CD8-positive, alpha-beta memory T cell (primary cell): ENCODE measurements at regions of chr7 and their contacts with region 1.

Region 1: GRCh38 chr7:43700059-43700501 is 29.2 kb downstream of the COA1 start:
- DNase-seq: peak in 2 of 5 donors; percentile 60 to 64
- H3K4me3 ChIP-seq: no peak overlapping the region
- H3K4me3 Mint-ChIP-seq: peak overlapping the region in 6 of 7 donors; percentile 17 to 56 (median 36)
- H3K27ac ChIP-seq: no peak overlapping the region
- H3K27ac Mint-ChIP-seq: peak overlapping the region; percentile 5 to 73 (median 46)
- H3K4me1 ChIP-seq: peaks cover 35% of the 10 kb centered on the region
- H3K4me1 Mint-ChIP-seq: peaks cover 30 to 68% (median 44%) of the 10 kb centered on the region in 3 donors
- H3K27me3 ChIP-seq: no peaks in the 10 kb centered on the region
- H3K27me3 Mint-ChIP-seq: no peaks in the 10 kb centered on the region

Region 2: DNA sequence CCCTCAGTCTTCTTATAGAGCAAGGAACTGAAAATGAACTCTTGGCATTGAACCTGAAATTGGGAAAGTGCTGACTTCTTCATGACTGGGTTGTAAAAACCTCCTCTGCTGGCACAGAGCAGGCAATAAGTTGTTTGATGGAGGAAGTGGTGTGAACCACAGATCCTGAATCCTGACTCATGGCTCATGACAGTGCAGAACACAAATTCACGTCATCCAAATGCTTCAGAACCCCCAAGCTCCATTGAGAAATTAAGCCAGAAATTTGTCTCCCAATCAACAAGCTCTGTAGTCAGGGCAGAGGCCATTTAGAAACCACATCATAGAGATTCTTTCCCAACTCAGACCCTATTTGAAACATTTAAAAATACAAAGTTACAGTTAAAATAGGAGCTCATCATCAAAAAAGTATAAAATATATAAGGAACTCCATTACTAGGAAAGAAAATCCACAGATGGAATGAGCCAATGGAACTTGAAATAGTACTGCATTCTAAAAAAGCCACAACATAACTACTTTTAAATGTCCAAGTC is 127.5 kb before region 1 on chr7:
- CTCF ChIA-PET with region 1: interaction called, 10 read pairs
- POLR2A ChIA-PET with region 1: no interaction called
- DNase-seq: no peak
- H3K4me3 ChIP-seq: no peak overlapping the region
- H3K4me3 Mint-ChIP-seq: no peak overlapping the region
- H3K27ac ChIP-seq: no peak overlapping the region
- H3K27ac Mint-ChIP-seq: peak overlapping the region in 1 of 8 donors; percentile 57
- H3K4me1 ChIP-seq: no peaks in the 10 kb centered on the region
- H3K4me1 Mint-ChIP-seq: peaks cover 0 to 5% (median 5%) of the 10 kb centered on the region in 3 donors
- H3K27me3 ChIP-seq: no peaks in the 10 kb centered on the region
- H3K27me3 Mint-ChIP-seq: peaks cover 0 to 1% of the 10 kb centered on the region in 2 donors

Region 3: GRCh38 chr7:43625453-43625852 is 74.6 kb before region 1 on chr7:
- CTCF ChIA-PET with region 1: interaction called, 14 read pairs
- POLR2A ChIA-PET with region 1: interaction called, 4 read pairs
- DNase-seq: peak; percentile 52 to 87 (median 80)
- H3K4me3 ChIP-seq: no peak overlapping the region
- H3K4me3 Mint-ChIP-seq: peak overlapping the region; percentile 35 to 77 (median 73)
- H3K27ac ChIP-seq: peak overlapping the region; percentile 40
- H3K27ac Mint-ChIP-seq: peak overlapping the region in 7 of 8 donors; percentile 62 to 94 (median 91)
- H3K4me1 ChIP-seq: peaks cover 93% of the 10 kb centered on the region
- H3K4me1 Mint-ChIP-seq: peaks cover 0 to 100% (median 90%) of the 10 kb centered on the region in 3 donors
- H3K27me3 ChIP-seq: no peaks in the 10 kb centered on the region
- H3K27me3 Mint-ChIP-seq: peaks cover 0 to 3% of the 10 kb centered on the region in 2 donors

Region 4: GRCh38 chr7:43647673-43648472 is 52.2 kb before region 1 on chr7:
- CTCF ChIA-PET with region 1: interaction called, 36 read pairs
- POLR2A ChIA-PET with region 1: interaction called, 27 read pairs
- DNase-seq: peak in 2 of 5 donors; percentile 40 to 57
- H3K4me3 ChIP-seq: peak overlapping the region; percentile 64
- H3K4me3 Mint-ChIP-seq: peak overlapping the region; percentile 63 to 95 (median 78)
- H3K27ac ChIP-seq: peak overlapping the region; percentile 71
- H3K27ac Mint-ChIP-seq: peak overlapping the region; percentile 73 to 100 (median 96)
- H3K4me1 ChIP-seq: peaks cover 94% of the 10 kb centered on the region
- H3K4me1 Mint-ChIP-seq: peaks cover 97 to 99% (median 98%) of the 10 kb centered on the region in 3 donors
- H3K27me3 ChIP-seq: no peaks in the 10 kb centered on the region
- H3K27me3 Mint-ChIP-seq: no peaks in the 10 kb centered on the region

Region 5: GRCh38 chr7:43721193-43721806 is 21.2 kb after region 1 on chr7:
- CTCF ChIA-PET with region 1: interaction called, 49 read pairs
- POLR2A ChIA-PET with region 1: no interaction called
- DNase-seq: peak in 2 of 5 donors; percentile 46 to 47
- H3K4me3 ChIP-seq: no peak overlapping the region
- H3K4me3 Mint-ChIP-seq: no peak overlapping the region
- H3K27ac ChIP-seq: no peak overlapping the region
- H3K27ac Mint-ChIP-seq: peak overlapping the region in 1 of 8 donors; percentile 90
- H3K4me1 ChIP-seq: no peaks in the 10 kb centered on the region
- H3K4me1 Mint-ChIP-seq: peaks cover 34 to 67% (median 43%) of the 10 kb centered on the region in 3 donors
- H3K27me3 ChIP-seq: no peaks in the 10 kb centered on the region
- H3K27me3 Mint-ChIP-seq: no peaks in the 10 kb centered on the region

Region 6: GRCh38 chr7:43834463-43835251 is 134.6 kb after region 1 on chr7:
- CTCF ChIA-PET with region 1: interaction called, 21 read pairs
- POLR2A ChIA-PET with region 1: no interaction called
- DNase-seq: peak; percentile 7 to 62 (median 42)
- H3K4me3 ChIP-seq: peak overlapping the region; percentile 51
- H3K4me3 Mint-ChIP-seq: peak overlapping the region; percentile 86 to 94 (median 90)
- H3K27ac ChIP-seq: peak overlapping the region; percentile 29
- H3K27ac Mint-ChIP-seq: peak overlapping the region; percentile 93 to 99 (median 98)
- H3K4me1 ChIP-seq: peaks cover 16% of the 10 kb centered on the region
- H3K4me1 Mint-ChIP-seq: peaks cover 19 to 32% (median 23%) of the 10 kb centered on the region in 3 donors
- H3K27me3 ChIP-seq: no peaks in the 10 kb centered on the region
- H3K27me3 Mint-ChIP-seq: peaks cover 0 to 3% of the 10 kb centered on the region in 2 donors